B cell (primary cell): ENCODE measurements at regions of chr19 and their contacts with region 1.

Region 1: GRCh38 chr19:13155472-13156359 is 5.5 kb downstream of the IER2 start:
- DNase-seq: peak; percentile 98
- ATAC-seq: peak; percentile 53
- H3K4me3 ChIP-seq: peak overlapping the region; percentile 82 to 100 (median 98)
- H3K4me3 Mint-ChIP-seq: peak overlapping the region; percentile 92
- H3K27ac ChIP-seq: peak overlapping the region; percentile 94 to 96
- H3K27ac Mint-ChIP-seq: peak overlapping the region; percentile 100
- H3K4me1 ChIP-seq: peaks cover 44 to 62% of the 10 kb centered on the region in 2 donors
- H3K4me1 Mint-ChIP-seq: peaks cover 42% of the 10 kb centered on the region
- H3K27me3 ChIP-seq: no peaks in the 10 kb centered on the region
- H3K27me3 Mint-ChIP-seq: no peaks in the 10 kb centered on the region
- CTCF ChIP-seq: no peak

Region 2: GRCh38 chr19:12255372-12255771 is 900.3 kb before region 1 on chr19:
- CTCF ChIA-PET with region 1: no interaction called
- POLR2A ChIA-PET with region 1: no interaction called
- intact Hi-C with region 1: no loop called
- DNase-seq: no peak
- ATAC-seq: no peak
- H3K4me3 ChIP-seq: no peak overlapping the region
- H3K4me3 Mint-ChIP-seq: no peak overlapping the region
- H3K27ac ChIP-seq: no peak overlapping the region
- H3K27ac Mint-ChIP-seq: no peak overlapping the region
- H3K4me1 ChIP-seq: no peaks in the 10 kb centered on the region
- H3K4me1 Mint-ChIP-seq: no peaks in the 10 kb centered on the region
- H3K27me3 ChIP-seq: no peaks in the 10 kb centered on the region
- H3K27me3 Mint-ChIP-seq: no peaks in the 10 kb centered on the region
- CTCF ChIP-seq: no peak

Region 3: GRCh38 chr19:13099073-13099999 is 56.4 kb before region 1 on chr19:
- CTCF ChIA-PET with region 1: interaction called, 28 read pairs
- POLR2A ChIA-PET with region 1: interaction called, 45 read pairs
- intact Hi-C with region 1: loop called (anchors 1 kb)
- DNase-seq: peak; percentile 90
- ATAC-seq: peak; percentile 6
- H3K4me3 ChIP-seq: peak overlapping the region; percentile 47 to 98 (median 96)
- H3K4me3 Mint-ChIP-seq: peak overlapping the region; percentile 93
- H3K27ac ChIP-seq: peak overlapping the region; percentile 79 to 83
- H3K27ac Mint-ChIP-seq: peak overlapping the region; percentile 98
- H3K4me1 ChIP-seq: peaks cover 32 to 71% of the 10 kb centered on the region in 2 donors
- H3K4me1 Mint-ChIP-seq: peaks cover 66% of the 10 kb centered on the region
- H3K27me3 ChIP-seq: no peaks in the 10 kb centered on the region
- H3K27me3 Mint-ChIP-seq: no peaks in the 10 kb centered on the region
- CTCF ChIP-seq: no peak

Region 4: GRCh38 chr19:13117772-13118423 is 37.8 kb before region 1 on chr19 and contains the start of gene NACC1:
- CTCF ChIA-PET with region 1: interaction called, 12 read pairs
- POLR2A ChIA-PET with region 1: interaction called, 29 read pairs
- intact Hi-C with region 1: loop called (anchors 1 kb)
- DNase-seq: peak; percentile 92
- ATAC-seq: peak; percentile 78
- H3K4me3 ChIP-seq: peak within 1 kb of the TSS; percentile 81 to 97 (median 85)
- H3K4me3 Mint-ChIP-seq: peak within 1 kb of the TSS; percentile 99
- H3K27ac ChIP-seq: peak within 1 kb of the TSS; percentile 47 to 81
- H3K27ac Mint-ChIP-seq: peak within 1 kb of the TSS; percentile 95
- H3K4me1 ChIP-seq: peaks cover 26 to 46% of the 10 kb centered on the region in 2 donors
- H3K4me1 Mint-ChIP-seq: peaks cover 55% of the 10 kb centered on the region
- H3K27me3 ChIP-seq: no peaks in the 10 kb centered on the region
- H3K27me3 Mint-ChIP-seq: no peaks in the 10 kb centered on the region
- CTCF ChIP-seq: no peak
- total RNA-seq, gene NACC1: 25.9 and 30.6 TPM in 2 replicates

Region 5: DNA sequence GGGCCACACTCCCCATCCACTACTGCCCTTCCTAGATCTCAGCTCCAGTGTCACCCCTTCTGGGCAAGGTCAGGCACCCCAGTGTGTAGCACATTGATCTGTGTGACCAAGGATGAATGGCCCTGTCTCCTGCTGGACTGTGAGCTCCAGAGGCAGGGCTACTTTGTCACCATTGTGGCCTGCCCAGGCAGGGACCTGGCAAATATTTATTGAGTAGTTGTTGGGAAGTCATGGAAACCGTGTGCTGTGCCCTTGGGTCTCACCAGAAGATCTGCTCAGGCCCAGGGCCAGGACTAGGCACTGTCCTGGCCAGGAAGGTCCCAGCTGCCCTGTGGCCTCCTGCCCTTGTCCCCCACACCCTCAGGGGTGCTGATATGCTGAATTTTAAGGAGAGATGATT is 27.1 kb before region 1 on chr19:
- CTCF ChIA-PET with region 1: no interaction called
- POLR2A ChIA-PET with region 1: no interaction called
- intact Hi-C with region 1: no loop called
- DNase-seq: no peak
- ATAC-seq: no peak
- H3K4me3 ChIP-seq: no peak overlapping the region
- H3K4me3 Mint-ChIP-seq: no peak overlapping the region
- H3K27ac ChIP-seq: no peak overlapping the region
- H3K27ac Mint-ChIP-seq: no peak overlapping the region
- H3K4me1 ChIP-seq: no peaks in the 10 kb centered on the region
- H3K4me1 Mint-ChIP-seq: peaks cover 12% of the 10 kb centered on the region
- H3K27me3 ChIP-seq: no peaks in the 10 kb centered on the region
- H3K27me3 Mint-ChIP-seq: no peaks in the 10 kb centered on the region
- CTCF ChIP-seq: no peak

Region 6: GRCh38 chr19:13172068-13172896 is 16.6 kb after region 1 on chr19:
- CTCF ChIA-PET with region 1: interaction called, 52 read pairs
- POLR2A ChIA-PET with region 1: interaction called, 116 read pairs
- intact Hi-C with region 1: loop called (anchors 1 kb)
- DNase-seq: peak; percentile 46
- ATAC-seq: no peak
- H3K4me3 ChIP-seq: peak overlapping the region in 1 of 5 experiments; percentile 12
- H3K4me3 Mint-ChIP-seq: peak overlapping the region; percentile 75
- H3K27ac ChIP-seq: peak overlapping the region; percentile 59 to 72
- H3K27ac Mint-ChIP-seq: peak overlapping the region; percentile 93
- H3K4me1 ChIP-seq: peaks cover 60 to 77% of the 10 kb centered on the region in 2 donors
- H3K4me1 Mint-ChIP-seq: peaks cover 63% of the 10 kb centered on the region
- H3K27me3 ChIP-seq: no peaks in the 10 kb centered on the region
- H3K27me3 Mint-ChIP-seq: no peaks in the 10 kb centered on the region
- CTCF ChIP-seq: no peak

Region 7: GRCh38 chr19:13181747-13182388 is 26.2 kb after region 1 on chr19:
- CTCF ChIA-PET with region 1: interaction called, 9 read pairs
- POLR2A ChIA-PET with region 1: interaction called, 38 read pairs
- intact Hi-C with region 1: no loop called
- DNase-seq: peak; percentile 49
- ATAC-seq: peak; percentile 58
- H3K4me3 ChIP-seq: no peak overlapping the region
- H3K4me3 Mint-ChIP-seq: peak overlapping the region; percentile 62
- H3K27ac ChIP-seq: no peak overlapping the region
- H3K27ac Mint-ChIP-seq: peak overlapping the region; percentile 84
- H3K4me1 ChIP-seq: peaks cover 27 to 37% of the 10 kb centered on the region in 2 donors
- H3K4me1 Mint-ChIP-seq: peaks cover 29% of the 10 kb centered on the region
- H3K27me3 ChIP-seq: no peaks in the 10 kb centered on the region
- H3K27me3 Mint-ChIP-seq: no peaks in the 10 kb centered on the region
- CTCF ChIP-seq: no peak

Region 8: DNA sequence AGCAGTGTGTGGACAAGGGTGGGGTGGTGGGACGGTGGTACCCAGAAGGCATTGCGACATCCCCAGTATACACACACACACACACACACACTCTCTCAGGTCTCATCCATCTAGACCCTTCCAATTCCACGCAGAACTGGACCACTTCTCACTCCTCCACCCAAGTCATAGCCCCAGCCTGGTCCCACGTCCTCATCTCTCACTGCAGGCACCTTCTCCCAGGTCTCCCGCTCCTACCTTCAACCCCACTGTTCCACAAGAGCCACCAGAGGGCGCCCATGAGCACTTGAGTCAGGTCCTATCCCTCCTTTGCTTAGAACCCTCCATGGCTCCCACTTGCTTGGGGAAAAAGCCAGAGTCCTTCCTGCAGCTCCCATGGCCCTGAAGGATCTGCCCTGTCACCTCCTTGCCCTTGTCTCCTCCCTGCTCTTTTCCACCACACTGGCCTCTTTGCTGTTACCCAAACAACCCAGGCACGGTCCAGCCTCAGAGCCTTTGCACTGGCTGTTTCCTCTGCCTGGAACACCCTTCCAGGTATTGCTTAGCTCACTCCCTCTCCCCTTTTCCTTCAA is 57.1 kb after region 1 on chr19:
- CTCF ChIA-PET with region 1: interaction called, 6 read pairs
- POLR2A ChIA-PET with region 1: interaction called, 7 read pairs
- intact Hi-C with region 1: loop called (anchors 1 kb)
- DNase-seq: peak; percentile 77
- ATAC-seq: no peak
- H3K4me3 ChIP-seq: no peak overlapping the region
- H3K4me3 Mint-ChIP-seq: peak overlapping the region; percentile 44
- H3K27ac ChIP-seq: no peak overlapping the region
- H3K27ac Mint-ChIP-seq: peak overlapping the region; percentile 29
- H3K4me1 ChIP-seq: peaks cover 41 to 54% of the 10 kb centered on the region in 2 donors
- H3K4me1 Mint-ChIP-seq: peaks cover 62% of the 10 kb centered on the region
- H3K27me3 ChIP-seq: no peaks in the 10 kb centered on the region
- H3K27me3 Mint-ChIP-seq: no peaks in the 10 kb centered on the region
- CTCF ChIP-seq: peak; percentile 69